ENCODE measurements at regions of chr9 and their contacts with region 1.

Region 1: GRCh38 chr9:35882263-35882848 is 12.2 kb upstream of the OR13J1 start:
- DNase-seq: peak; percentile 81

Region 2: GRCh38 chr9:35790385-35791296 is 91.7 kb before region 1 on chr9:
- CTCF ChIA-PET with region 1: interaction called, 16 read pairs
- POLR2A ChIA-PET with region 1: no interaction called
- DNase-seq: peak; percentile 88

Region 3: GRCh38 chr9:35826071-35826701 is 56.2 kb before region 1 on chr9:
- CTCF ChIA-PET with region 1: interaction called, 10 read pairs
- POLR2A ChIA-PET with region 1: no interaction called
- DNase-seq: peak; percentile 65